ENCODE measurements at regions of chr16 and their contacts with region 1.

Region 1: GRCh38 chr16:81940781-81941560 is 70.3 kb downstream of the SDR42E1 start:
- DNase-seq: peak; percentile 67
- H3K4me3 ChIP-seq: no peak overlapping the region
- H3K27ac ChIP-seq: no peak overlapping the region
- H3K4me1 ChIP-seq: no peaks in the 10 kb centered on the region
- H3K27me3 ChIP-seq: no peaks in the 10 kb centered on the region
- CTCF ChIP-seq: peak; percentile 67

Region 2: DNA sequence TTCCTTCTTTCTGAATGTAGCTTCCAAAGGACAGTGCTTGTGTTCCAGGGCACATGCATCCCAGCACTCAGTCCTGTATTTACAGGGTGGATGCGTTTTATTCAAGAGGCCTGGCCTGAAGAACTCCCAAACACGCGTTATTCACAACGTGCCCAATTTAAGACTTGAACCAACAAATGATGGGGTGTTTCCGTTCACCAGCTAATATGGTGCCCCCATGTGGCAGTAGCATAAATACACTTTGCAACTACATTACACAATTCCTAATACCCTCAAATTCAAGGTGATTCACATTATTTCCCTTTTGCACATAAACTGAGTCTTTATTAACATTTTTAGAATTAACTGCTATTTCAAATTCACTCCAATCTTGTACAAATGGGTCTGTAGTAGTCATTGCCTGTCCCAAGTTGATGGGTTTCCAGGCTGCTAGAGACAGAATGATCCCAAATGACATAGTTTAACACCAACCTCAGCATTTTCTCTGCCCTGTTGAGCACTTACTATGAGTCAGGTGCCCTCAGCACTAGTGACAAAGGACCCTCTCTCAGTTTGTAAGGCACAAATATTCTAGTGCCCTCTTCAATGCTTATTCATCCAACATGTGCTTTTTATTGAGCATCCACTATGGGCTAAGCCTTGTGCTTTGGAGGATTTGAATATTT is 121.0 kb after region 1 on chr16:
- CTCF ChIA-PET with region 1: no interaction called
- POLR2A ChIA-PET with region 1: no interaction called
- intact Hi-C with region 1: loop called (anchors 2 kb)
- DNase-seq: peak; percentile 59
- H3K4me3 ChIP-seq: no peak overlapping the region
- H3K27ac ChIP-seq: no peak overlapping the region
- H3K4me1 ChIP-seq: no peaks in the 10 kb centered on the region
- H3K27me3 ChIP-seq: no peaks in the 10 kb centered on the region
- CTCF ChIP-seq: peak; percentile 76

Region 3: DNA sequence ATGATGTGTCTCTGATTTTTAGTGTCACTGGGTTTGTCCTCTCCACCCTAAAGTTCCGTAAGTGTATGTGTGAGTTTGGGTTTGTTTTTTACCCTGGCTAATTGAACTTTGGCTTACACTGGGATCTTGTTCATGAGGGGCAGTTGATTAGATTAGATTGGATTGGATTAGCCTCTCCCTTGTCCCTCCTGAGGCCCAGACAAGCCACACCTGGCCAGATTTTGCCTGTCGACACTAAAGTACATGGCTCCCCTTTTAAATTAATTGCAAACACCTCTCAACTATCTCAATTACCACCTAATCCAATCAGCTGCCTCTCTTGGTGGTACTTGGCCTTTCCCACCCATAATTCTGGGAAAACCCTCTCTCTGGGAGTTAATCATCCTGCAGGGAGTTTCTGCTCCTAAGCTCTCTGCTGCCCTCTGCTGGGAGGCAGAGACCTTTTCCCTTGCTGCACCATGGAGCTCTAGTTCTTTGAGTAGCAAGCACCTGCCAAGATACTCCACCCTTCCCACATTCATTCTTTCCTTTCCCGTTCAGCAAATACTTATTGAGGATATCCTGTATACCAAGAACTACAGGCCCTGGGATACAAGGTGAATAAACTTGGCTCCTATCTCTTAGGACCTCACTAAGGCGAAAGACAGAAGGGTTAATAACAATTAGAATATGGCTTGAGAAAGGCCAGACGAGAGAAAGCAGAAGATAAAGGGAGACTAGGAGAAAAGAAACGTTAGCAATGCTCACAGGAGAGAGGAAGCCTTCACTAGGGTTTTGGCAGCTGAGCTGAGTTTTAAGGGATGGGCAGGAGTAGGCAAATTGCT is 289.0 kb after region 1 on chr16:
- CTCF ChIA-PET with region 1: interaction called, 5 read pairs
- POLR2A ChIA-PET with region 1: no interaction called
- intact Hi-C with region 1: loop called (anchors 2 kb)
- DNase-seq: peak; percentile 84
- H3K4me3 ChIP-seq: no peak overlapping the region
- H3K27ac ChIP-seq: no peak overlapping the region
- H3K4me1 ChIP-seq: no peaks in the 10 kb centered on the region
- H3K27me3 ChIP-seq: no peaks in the 10 kb centered on the region
- CTCF ChIP-seq: peak; percentile 93

Region 4: DNA sequence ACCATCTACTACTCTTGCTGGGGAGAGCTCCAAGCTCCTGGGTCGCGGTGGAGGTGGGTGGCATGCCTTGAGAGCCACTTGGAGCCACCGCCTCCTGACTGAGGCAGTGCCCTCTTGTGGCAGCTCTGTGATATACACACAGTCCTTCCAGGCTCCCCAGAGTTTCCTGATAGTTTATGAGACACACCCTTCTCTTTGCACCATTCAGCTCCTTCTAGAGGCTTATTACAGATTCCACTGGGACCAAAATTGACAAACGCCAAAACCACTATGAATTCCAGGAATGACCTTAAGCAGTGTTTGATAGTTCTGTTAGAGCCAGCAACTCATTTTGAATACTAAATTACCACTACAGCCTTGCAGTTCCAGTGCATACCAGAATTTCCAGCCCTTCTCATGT is 515.7 kb after region 1 on chr16:
- CTCF ChIA-PET with region 1: no interaction called
- POLR2A ChIA-PET with region 1: no interaction called
- intact Hi-C with region 1: loop called (anchors 2 kb)
- DNase-seq: peak; percentile 70
- H3K4me3 ChIP-seq: no peak overlapping the region
- H3K27ac ChIP-seq: no peak overlapping the region
- H3K4me1 ChIP-seq: no peaks in the 10 kb centered on the region
- H3K27me3 ChIP-seq: no peaks in the 10 kb centered on the region
- CTCF ChIP-seq: peak; percentile 84

Region 5: DNA sequence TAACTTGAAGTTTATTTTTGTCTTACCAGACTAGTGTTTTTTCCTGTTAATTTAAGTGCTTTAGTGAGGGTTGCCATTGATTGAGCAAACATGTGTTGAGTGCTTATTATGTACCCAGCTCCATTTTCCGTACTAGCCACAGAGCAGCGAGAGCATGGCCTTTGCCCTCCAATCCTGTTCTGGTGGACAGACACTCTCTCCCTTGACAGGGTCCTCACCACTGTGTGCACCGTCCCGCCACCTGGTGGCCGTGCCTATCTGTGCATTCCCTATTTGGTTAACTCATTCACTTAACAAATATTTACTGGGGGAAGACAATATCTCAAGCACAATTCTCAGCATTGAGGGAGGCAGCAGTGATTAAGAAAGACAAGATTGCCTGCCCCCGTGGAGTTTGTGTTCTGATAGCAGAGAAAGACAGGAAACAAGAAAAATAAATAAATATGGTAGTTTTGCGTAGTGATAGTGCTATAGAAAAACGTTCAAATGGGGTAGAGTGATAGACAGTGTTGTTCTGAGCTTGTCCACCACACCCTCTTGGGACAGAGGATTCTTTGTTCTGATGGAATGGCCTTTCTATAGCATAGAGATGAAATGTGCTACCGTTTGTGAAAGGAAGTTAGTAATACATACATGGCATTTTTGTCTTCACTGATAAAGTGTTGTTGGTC is 698.8 kb after region 1 on chr16:
- CTCF ChIA-PET with region 1: no interaction called
- POLR2A ChIA-PET with region 1: no interaction called
- intact Hi-C with region 1: loop called (anchors 10 kb)
- DNase-seq: peak; percentile 66
- H3K4me3 ChIP-seq: no peak overlapping the region
- H3K27ac ChIP-seq: no peak overlapping the region
- H3K4me1 ChIP-seq: peaks cover 11% of the 10 kb centered on the region
- H3K27me3 ChIP-seq: no peaks in the 10 kb centered on the region
- CTCF ChIP-seq: peak; percentile 93

Measured in A673 (cell line).